ENCODE measurements at regions of chr7 and their contacts with region 1.

Region 1: GRCh38 chr7:156604311-156604710 is 36.3 kb upstream of the RNF32 start:
- DNase-seq: no peak
- ATAC-seq: no peak
- H3K4me3 ChIP-seq: no peak overlapping the region
- H3K4me3 Mint-ChIP-seq: no peak overlapping the region
- H3K27ac ChIP-seq: no peak overlapping the region
- H3K27ac Mint-ChIP-seq: no peak overlapping the region
- H3K4me1 ChIP-seq: peaks cover 9 to 13% of the 10 kb centered on the region in 2 donors
- H3K4me1 Mint-ChIP-seq: peaks cover 3% of the 10 kb centered on the region
- H3K27me3 ChIP-seq: peaks cover 0 to 19% (median 5%) of the 10 kb centered on the region in 4 experiments
- H3K27me3 Mint-ChIP-seq: peaks cover 26% of the 10 kb centered on the region
- CTCF ChIP-seq: no peak

Region 2: GRCh38 chr7:156589808-156590207 is 14.5 kb before region 1 on chr7:
- CTCF ChIA-PET with region 1: no interaction called
- POLR2A ChIA-PET with region 1: no interaction called
- intact Hi-C with region 1: loop called (anchors 1 kb)
- DNase-seq: no peak
- ATAC-seq: no peak
- H3K4me3 ChIP-seq: no peak overlapping the region
- H3K4me3 Mint-ChIP-seq: no peak overlapping the region
- H3K27ac ChIP-seq: no peak overlapping the region
- H3K27ac Mint-ChIP-seq: no peak overlapping the region
- H3K4me1 ChIP-seq: no peaks in the 10 kb centered on the region
- H3K4me1 Mint-ChIP-seq: no peaks in the 10 kb centered on the region
- H3K27me3 ChIP-seq: no peaks in the 10 kb centered on the region
- H3K27me3 Mint-ChIP-seq: peaks cover 4% of the 10 kb centered on the region
- CTCF ChIP-seq: no peak

Region 3: DNA sequence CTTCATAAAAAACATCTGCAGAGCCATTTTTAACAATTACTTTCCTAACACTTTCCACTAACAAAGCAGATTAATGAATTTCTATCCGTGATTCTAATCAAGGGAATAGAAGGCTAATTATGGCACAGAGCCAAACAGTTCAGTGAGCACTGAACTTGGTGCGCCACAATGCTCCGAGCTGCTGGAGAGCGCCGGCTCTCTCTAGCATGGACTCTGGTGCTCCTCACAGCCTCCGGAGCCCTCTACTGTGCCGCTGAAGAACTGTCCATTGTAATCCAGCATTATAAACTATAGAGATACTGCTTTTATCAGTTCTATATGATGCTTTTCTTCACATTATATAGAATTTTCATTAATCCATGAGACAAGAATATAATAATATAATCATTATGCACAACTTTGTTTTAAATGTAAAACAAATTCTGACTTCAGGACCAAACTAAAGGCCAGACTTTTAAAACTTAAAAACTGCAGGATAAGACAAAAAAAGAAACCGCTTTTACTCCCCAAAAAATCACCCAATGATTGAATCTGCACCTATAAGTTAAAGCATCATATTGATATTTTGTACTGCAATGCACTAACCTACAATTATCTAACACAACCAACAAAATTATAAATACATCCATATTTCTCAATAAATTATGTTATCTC is 159.8 kb after region 1 on chr7:
- CTCF ChIA-PET with region 1: no interaction called
- POLR2A ChIA-PET with region 1: no interaction called
- intact Hi-C with region 1: no loop called
- DNase-seq: no peak
- ATAC-seq: no peak
- H3K4me3 ChIP-seq: no peak overlapping the region
- H3K4me3 Mint-ChIP-seq: no peak overlapping the region
- H3K27ac ChIP-seq: no peak overlapping the region
- H3K27ac Mint-ChIP-seq: no peak overlapping the region
- H3K4me1 ChIP-seq: peaks cover 0 to 3% of the 10 kb centered on the region in 2 donors
- H3K4me1 Mint-ChIP-seq: peaks cover 5% of the 10 kb centered on the region
- H3K27me3 ChIP-seq: no peaks in the 10 kb centered on the region
- H3K27me3 Mint-ChIP-seq: no peaks in the 10 kb centered on the region
- CTCF ChIP-seq: no peak

Region 4: GRCh38 chr7:157113607-157114006 is 509.3 kb after region 1 on chr7:
- CTCF ChIA-PET with region 1: no interaction called
- POLR2A ChIA-PET with region 1: no interaction called
- intact Hi-C with region 1: no loop called
- DNase-seq: no peak
- ATAC-seq: no peak
- H3K4me3 ChIP-seq: no peak overlapping the region
- H3K4me3 Mint-ChIP-seq: no peak overlapping the region
- H3K27ac ChIP-seq: no peak overlapping the region
- H3K27ac Mint-ChIP-seq: no peak overlapping the region
- H3K4me1 ChIP-seq: no peaks in the 10 kb centered on the region
- H3K4me1 Mint-ChIP-seq: no peaks in the 10 kb centered on the region
- H3K27me3 ChIP-seq: peaks cover 0 to 15% (median 2%) of the 10 kb centered on the region in 4 experiments
- H3K27me3 Mint-ChIP-seq: peaks cover 13% of the 10 kb centered on the region
- CTCF ChIP-seq: no peak